ENCODE measurements at regions of chr19 and their contacts with region 1.

Region 1: GRCh38 chr19:2168619-2169424 is 5.1 kb downstream of the DOT1L start:
- DNase-seq: peak; percentile 74
- ATAC-seq: peak; percentile 49
- H3K4me3 Mint-ChIP-seq: peak overlapping the region; percentile 84
- H3K27ac Mint-ChIP-seq: peak overlapping the region; percentile 92
- H3K4me1 Mint-ChIP-seq: peaks cover 84% of the 10 kb centered on the region
- H3K27me3 Mint-ChIP-seq: no peaks in the 10 kb centered on the region
- CTCF ChIP-seq: no peak

Region 2: DNA sequence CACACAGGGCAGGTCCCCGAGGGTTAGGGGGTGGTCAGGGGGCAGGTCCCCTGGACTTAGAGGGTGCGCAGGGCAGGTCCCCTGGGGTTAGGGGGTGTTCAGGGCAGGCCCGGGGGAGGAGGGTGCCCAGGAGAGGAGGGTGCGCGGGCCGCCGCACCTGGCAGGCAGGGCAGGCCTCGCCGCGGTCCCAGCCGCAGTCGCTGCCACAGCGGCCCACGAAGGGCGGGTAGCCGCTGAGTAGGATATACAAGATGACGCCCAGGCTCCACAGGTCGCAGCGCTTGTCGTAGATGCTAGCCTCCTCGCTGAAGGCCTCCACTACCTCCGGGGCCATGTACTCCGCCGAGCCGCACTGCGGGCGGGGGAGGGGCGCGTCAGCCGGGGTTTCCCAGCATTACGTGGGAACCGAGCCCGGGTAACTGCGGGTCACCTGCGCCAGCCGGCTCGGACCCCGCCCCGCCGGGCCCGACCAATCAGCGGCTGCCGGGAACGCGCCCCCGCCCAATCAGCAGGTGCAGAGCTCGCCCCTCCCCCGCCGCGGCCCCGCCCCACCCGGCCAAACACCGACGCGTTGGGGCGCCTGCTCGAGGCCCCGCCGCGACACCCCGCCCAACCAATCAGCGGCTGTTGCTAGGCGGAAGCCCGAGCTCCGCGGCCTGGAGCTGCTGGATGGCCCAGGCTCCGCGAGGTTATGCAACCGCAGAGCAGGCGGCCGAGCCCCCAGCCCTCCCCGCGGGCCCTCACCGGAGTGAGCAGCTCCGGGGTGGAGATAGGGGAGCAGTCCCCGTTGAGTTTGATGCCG is 126.9 kb before region 1 on chr19:
- CTCF ChIA-PET with region 1: no interaction called
- POLR2A ChIA-PET with region 1: interaction called, 5 read pairs
- intact Hi-C with region 1: loop called (anchors 5 kb)
- DNase-seq: peak; percentile 96
- ATAC-seq: peak; percentile 69
- H3K4me3 Mint-ChIP-seq: peak overlapping the region; percentile 61
- H3K27ac Mint-ChIP-seq: peak overlapping the region; percentile 81
- H3K4me1 Mint-ChIP-seq: peaks cover 70% of the 10 kb centered on the region
- H3K27me3 Mint-ChIP-seq: no peaks in the 10 kb centered on the region
- CTCF ChIP-seq: no peak

Region 3: GRCh38 chr19:2186071-2186846 is 17.4 kb after region 1 on chr19:
- CTCF ChIA-PET with region 1: interaction called, 3 read pairs
- POLR2A ChIA-PET with region 1: interaction called, 15 read pairs
- intact Hi-C with region 1: loop called (anchors 1 kb)
- DNase-seq: no peak
- ATAC-seq: no peak
- H3K4me3 Mint-ChIP-seq: no peak overlapping the region
- H3K27ac Mint-ChIP-seq: no peak overlapping the region
- H3K4me1 Mint-ChIP-seq: peaks cover 64% of the 10 kb centered on the region
- H3K27me3 Mint-ChIP-seq: no peaks in the 10 kb centered on the region
- CTCF ChIP-seq: no peak

Region 4: DNA sequence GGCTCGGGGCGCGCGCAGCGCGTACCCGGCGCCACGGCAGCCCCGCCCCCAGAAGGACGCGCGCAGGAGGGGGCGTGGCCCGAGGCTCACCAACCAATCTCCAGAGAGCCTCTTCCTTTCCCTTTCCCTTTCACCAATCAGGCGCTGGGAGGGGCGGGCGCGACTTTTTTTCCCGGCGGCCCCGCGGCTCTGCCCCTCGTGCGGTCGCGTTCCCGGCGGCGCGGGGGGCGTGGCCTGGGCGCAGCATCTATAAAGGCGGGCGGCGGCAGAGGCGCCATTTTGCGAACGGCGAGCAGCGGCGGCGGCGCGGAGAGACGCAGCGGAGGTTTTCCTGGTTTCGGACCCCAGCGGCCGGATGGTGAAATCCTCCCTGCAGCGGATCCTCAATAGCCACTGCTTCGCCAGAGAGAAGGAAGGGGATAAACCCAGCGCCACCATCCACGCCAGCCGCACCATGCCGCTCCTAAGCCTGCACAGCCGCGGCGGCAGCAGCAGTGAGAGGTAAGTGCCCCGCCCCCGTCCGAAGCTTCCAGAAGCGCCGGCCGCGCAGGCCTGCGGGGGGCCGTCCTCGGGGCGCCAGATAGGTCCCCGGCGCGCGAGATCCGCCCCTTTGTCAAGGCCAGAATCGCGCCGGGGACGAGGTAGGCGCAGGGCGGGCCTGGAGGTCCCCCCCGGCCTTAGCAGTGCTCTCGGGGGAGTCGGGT is 100.6 kb after region 1 on chr19:
- CTCF ChIA-PET with region 1: interaction called, 4 read pairs
- POLR2A ChIA-PET with region 1: interaction called, 17 read pairs
- intact Hi-C with region 1: loop called (anchors 1 kb)
- DNase-seq: peak; percentile 100
- ATAC-seq: peak; percentile 67
- H3K4me3 Mint-ChIP-seq: peak overlapping the region; percentile 92
- H3K27ac Mint-ChIP-seq: peak overlapping the region; percentile 91
- H3K4me1 Mint-ChIP-seq: peaks cover 60% of the 10 kb centered on the region
- H3K27me3 Mint-ChIP-seq: no peaks in the 10 kb centered on the region
- CTCF ChIP-seq: no peak

Region 5: GRCh38 chr19:2627319-2627829 is 458.6 kb after region 1 on chr19:
- CTCF ChIA-PET with region 1: no interaction called
- POLR2A ChIA-PET with region 1: no interaction called
- intact Hi-C with region 1: loop called (anchors 5 kb)
- DNase-seq: peak; percentile 68
- ATAC-seq: peak; percentile 62
- H3K4me3 Mint-ChIP-seq: peak overlapping the region; percentile 76
- H3K27ac Mint-ChIP-seq: peak overlapping the region; percentile 94
- H3K4me1 Mint-ChIP-seq: peaks cover 95% of the 10 kb centered on the region
- H3K27me3 Mint-ChIP-seq: no peaks in the 10 kb centered on the region
- CTCF ChIP-seq: no peak